ENCODE measurements at regions of chr18 and their contacts with region 1.

Region 1: DNA sequence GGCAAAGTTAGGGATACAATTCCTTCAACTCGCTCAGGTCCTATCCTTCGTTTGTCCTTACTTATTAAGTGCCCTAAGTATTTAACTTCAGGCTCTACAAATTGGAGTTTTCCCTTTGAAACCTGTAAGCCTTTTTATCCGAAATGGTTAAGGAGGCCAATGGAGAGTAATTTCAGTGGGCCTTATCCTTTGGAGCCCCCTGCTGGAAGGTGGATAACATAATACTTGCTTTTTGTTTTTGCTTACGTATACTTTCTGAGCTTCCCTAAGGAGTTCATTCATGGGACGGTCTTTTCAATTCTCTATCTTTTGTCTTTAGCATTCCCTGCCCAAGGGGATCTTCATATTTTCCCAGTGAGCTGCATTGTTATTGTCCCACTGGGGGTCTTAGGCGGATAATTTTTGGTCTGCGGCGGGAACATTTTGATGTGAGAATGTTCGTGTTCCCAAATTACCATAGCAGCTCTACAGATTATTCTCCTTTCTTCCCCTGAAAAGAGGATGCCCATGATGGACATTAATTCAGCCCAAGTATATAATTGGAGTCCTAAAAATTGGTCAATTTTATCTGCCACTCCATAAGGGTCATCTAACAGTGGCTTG is 34.4 kb upstream of the TRAPPC8 start:
- DNase-seq: peak; percentile 38
- H3K4me3 Mint-ChIP-seq: no peak overlapping the region
- H3K27ac Mint-ChIP-seq: no peak overlapping the region
- H3K4me1 Mint-ChIP-seq: no peaks in the 10 kb centered on the region
- H3K27me3 Mint-ChIP-seq: no peaks in the 10 kb centered on the region

Region 2: GRCh38 chr18:31760695-31761094 is 216.7 kb before region 1 on chr18 and contains the start of gene SLC25A52:
- CTCF ChIA-PET with region 1: no interaction called
- POLR2A ChIA-PET with region 1: no interaction called
- intact Hi-C with region 1: no loop called
- DNase-seq: no peak
- H3K4me3 Mint-ChIP-seq: no peak within 1 kb of the TSS
- H3K27ac Mint-ChIP-seq: no peak within 1 kb of the TSS
- H3K4me1 Mint-ChIP-seq: no peaks in the 10 kb centered on the region
- H3K27me3 Mint-ChIP-seq: peaks cover 3% of the 10 kb centered on the region
- total RNA-seq, gene SLC25A52: 0.21 TPM in 1 of 2 experiments, not detected in the other

Region 3: DNA sequence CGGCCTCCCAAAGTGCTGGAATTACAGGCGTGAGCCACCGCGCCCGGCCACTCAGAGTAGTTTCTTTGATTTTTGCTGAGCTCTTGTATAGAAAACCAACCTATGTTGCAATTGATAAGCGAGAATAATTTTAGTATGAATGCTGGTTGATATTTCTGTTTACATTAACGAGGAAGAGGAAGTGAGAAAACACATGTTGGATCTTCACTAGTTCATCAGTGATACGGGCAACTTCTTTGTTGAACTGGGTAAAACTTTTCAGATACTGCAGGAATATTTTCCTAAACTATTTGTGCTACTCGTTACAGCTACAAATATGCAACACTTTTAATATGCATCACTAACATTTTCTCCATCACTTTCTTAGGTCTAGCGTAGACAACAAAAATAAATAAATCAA is 148.8 kb before region 1 on chr18:
- CTCF ChIA-PET with region 1: no interaction called
- POLR2A ChIA-PET with region 1: no interaction called
- intact Hi-C with region 1: no loop called
- DNase-seq: no peak
- H3K4me3 Mint-ChIP-seq: no peak overlapping the region
- H3K27ac Mint-ChIP-seq: no peak overlapping the region
- H3K4me1 Mint-ChIP-seq: no peaks in the 10 kb centered on the region
- H3K27me3 Mint-ChIP-seq: no peaks in the 10 kb centered on the region

Region 4: GRCh38 chr18:31918733-31919132 is 58.6 kb before region 1 on chr18:
- CTCF ChIA-PET with region 1: no interaction called
- POLR2A ChIA-PET with region 1: no interaction called
- intact Hi-C with region 1: loop called (anchors 10 kb)
- DNase-seq: no peak
- H3K4me3 Mint-ChIP-seq: no peak overlapping the region
- H3K27ac Mint-ChIP-seq: no peak overlapping the region
- H3K4me1 Mint-ChIP-seq: no peaks in the 10 kb centered on the region
- H3K27me3 Mint-ChIP-seq: no peaks in the 10 kb centered on the region

Region 5: DNA sequence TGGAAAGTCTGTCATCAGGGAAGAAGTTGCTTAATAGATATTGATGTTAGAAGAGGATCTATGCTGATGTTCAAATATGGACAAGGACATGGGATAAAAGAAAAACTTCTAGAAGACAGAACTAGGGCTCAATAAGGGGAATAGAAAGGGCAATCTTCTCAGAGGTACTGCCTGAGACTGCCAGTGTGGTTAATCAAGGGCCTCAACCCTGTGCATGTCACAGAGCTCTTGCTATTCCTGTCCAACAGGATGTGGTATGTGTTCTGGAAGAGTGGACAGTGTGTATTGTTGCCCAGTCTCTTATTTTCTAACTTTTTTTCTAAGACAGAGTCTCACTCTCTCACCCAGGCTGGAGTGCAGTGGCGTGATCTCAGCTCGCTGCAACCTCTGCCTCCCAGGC is 13.5 kb after region 1 on chr18:
- CTCF ChIA-PET with region 1: interaction called, 12 read pairs
- POLR2A ChIA-PET with region 1: no interaction called
- intact Hi-C with region 1: no loop called
- DNase-seq: no peak
- H3K4me3 Mint-ChIP-seq: no peak overlapping the region
- H3K27ac Mint-ChIP-seq: no peak overlapping the region
- H3K4me1 Mint-ChIP-seq: no peaks in the 10 kb centered on the region
- H3K27me3 Mint-ChIP-seq: no peaks in the 10 kb centered on the region

Measured in activated CD4-positive, alpha-beta memory T cell treated with anti-CD3 and anti-CD28 coated beads for 36 hours (primary cell).